PC-9 (cell line): ENCODE measurements at regions of chr12 and their contacts with region 1.

Region 1: GRCh38 chr12:68378872-68379782 is 47.0 kb upstream of the MDM1 start:
- DNase-seq: peak; percentile 59 to 78
- H3K4me3 ChIP-seq: no peak overlapping the region
- H3K27ac ChIP-seq: no peak overlapping the region
- H3K4me1 ChIP-seq: peaks cover 32% of the 10 kb centered on the region
- H3K27me3 ChIP-seq: no peaks in the 10 kb centered on the region
- CTCF ChIP-seq: no peak

Region 2: GRCh38 chr12:68259318-68259940 is 119.7 kb before region 1 on chr12:
- CTCF ChIA-PET with region 1: no interaction called
- POLR2A ChIA-PET with region 1: interaction called, 16 read pairs
- intact Hi-C with region 1: no loop called
- DNase-seq: peak in 1 of 2 experiments; percentile 87
- H3K4me3 ChIP-seq: no peak overlapping the region
- H3K27ac ChIP-seq: peak overlapping the region; percentile 69
- H3K4me1 ChIP-seq: peaks cover 18% of the 10 kb centered on the region
- H3K27me3 ChIP-seq: no peaks in the 10 kb centered on the region
- CTCF ChIP-seq: no peak